Activated B cell treated with CpG ODN at 0.5 μM for 24 hours (primary cell): ENCODE measurements at regions of chr6 and their contacts with region 1.

Region 1: DNA sequence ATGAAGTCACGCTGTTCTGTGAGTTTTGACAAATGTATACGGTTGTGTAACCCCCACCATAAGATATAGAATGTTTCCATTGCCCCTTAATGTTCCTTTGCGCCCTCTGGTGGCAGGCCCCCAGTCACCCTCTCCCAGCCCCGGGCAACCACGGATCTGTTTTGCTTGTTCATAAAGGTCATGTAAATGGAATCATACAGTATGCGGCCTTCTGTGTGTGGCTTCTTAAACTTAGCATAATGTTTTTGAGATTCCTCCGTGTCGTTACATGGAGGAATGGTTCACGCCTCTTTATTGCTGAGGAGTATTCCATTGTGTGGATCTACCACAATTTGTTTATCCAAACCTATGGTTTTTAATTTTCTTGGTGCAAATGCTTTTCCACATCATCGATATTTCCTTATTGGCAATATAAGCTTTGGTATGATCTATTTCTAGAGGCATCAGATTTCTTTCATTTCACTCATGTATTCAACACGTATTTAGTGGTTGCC is 28.4 kb downstream of the LYRM2 start:
- DNase-seq: peak; percentile 67
- ATAC-seq: peak; percentile 81
- H3K4me3 Mint-ChIP-seq: no peak overlapping the region
- H3K27ac Mint-ChIP-seq: no peak overlapping the region
- H3K4me1 Mint-ChIP-seq: no peaks in the 10 kb centered on the region
- H3K27me3 Mint-ChIP-seq: no peaks in the 10 kb centered on the region
- CTCF ChIP-seq: peak; percentile 57

Region 2: GRCh38 chr6:89122625-89123024 is 487.6 kb before region 1 on chr6:
- CTCF ChIA-PET with region 1: no interaction called
- POLR2A ChIA-PET with region 1: no interaction called
- intact Hi-C with region 1: loop called (anchors 2 kb)
- DNase-seq: no peak
- ATAC-seq: peak; percentile 31
- H3K4me3 Mint-ChIP-seq: no peak overlapping the region
- H3K27ac Mint-ChIP-seq: no peak overlapping the region
- H3K4me1 Mint-ChIP-seq: no peaks in the 10 kb centered on the region
- H3K27me3 Mint-ChIP-seq: no peaks in the 10 kb centered on the region
- CTCF ChIP-seq: no peak

Region 3: DNA sequence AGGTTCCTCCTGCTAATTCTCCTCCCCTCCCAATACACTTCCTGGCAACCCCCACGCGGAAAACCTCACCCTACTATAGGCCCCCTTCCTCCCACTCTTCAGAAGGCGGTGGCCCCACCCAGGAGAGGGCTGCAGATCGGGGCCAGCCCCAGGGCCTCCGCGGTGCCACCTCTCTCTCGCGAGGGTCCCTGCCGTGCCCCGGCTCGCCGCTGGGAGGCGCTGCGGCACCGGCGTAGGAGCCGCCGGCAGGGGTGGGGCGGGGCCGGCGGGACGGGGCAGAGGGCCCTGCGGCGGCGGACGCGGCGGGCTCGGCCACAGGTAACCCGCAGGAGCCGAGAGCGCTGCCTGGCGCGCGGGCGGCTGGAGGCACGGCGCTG is 177.3 kb before region 1 on chr6 and contains the start of gene ANKRD6:
- CTCF ChIA-PET with region 1: interaction called, 21 read pairs
- POLR2A ChIA-PET with region 1: no interaction called
- intact Hi-C with region 1: loop called (anchors 1 kb)
- DNase-seq: peak; percentile 95
- ATAC-seq: peak; percentile 97
- H3K4me3 Mint-ChIP-seq: peak within 1 kb of the TSS; percentile 86
- H3K27ac Mint-ChIP-seq: peak within 1 kb of the TSS; percentile 41
- H3K4me1 Mint-ChIP-seq: peaks cover 11% of the 10 kb centered on the region
- H3K27me3 Mint-ChIP-seq: peaks cover 4% of the 10 kb centered on the region
- CTCF ChIP-seq: no peak
- total RNA-seq, gene ANKRD6: 6.6 and 9.6 TPM in 2 replicates

Region 4: DNA sequence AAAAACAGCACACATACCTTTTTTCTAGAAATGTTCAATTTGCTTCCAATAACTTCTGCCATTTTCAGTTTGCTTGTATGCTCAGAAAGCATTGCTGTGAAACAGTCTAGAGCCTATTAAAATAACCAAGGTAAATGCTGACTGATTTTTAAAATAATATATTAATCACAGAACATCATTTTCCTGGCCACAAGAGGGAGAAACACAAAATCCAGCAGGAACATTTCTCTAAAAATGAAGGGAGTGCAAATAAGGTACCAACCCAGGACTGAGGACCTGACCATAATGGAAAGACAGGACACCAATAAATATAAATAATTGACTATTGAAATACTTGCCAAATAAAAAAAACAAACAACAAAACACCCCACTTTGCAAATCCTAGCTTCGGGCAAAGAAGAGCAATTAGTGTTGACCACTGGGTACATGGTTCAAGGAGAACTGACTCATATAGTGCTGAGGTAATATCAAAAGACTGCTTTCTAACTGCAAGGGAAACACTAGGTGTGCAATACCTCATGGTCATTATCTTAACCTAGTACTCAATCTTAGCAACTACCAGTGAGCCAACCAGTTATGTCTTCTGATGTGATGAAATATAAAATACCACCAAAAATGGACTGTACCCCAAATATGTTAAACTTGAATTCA is 166.5 kb after region 1 on chr6:
- CTCF ChIA-PET with region 1: no interaction called
- POLR2A ChIA-PET with region 1: no interaction called
- intact Hi-C with region 1: no loop called
- DNase-seq: no peak
- ATAC-seq: no peak
- H3K4me3 Mint-ChIP-seq: no peak overlapping the region
- H3K27ac Mint-ChIP-seq: no peak overlapping the region
- H3K4me1 Mint-ChIP-seq: no peaks in the 10 kb centered on the region
- H3K27me3 Mint-ChIP-seq: no peaks in the 10 kb centered on the region
- CTCF ChIP-seq: no peak